ENCODE measurements at regions of chr11 and their contacts with region 1.

Region 1: DNA sequence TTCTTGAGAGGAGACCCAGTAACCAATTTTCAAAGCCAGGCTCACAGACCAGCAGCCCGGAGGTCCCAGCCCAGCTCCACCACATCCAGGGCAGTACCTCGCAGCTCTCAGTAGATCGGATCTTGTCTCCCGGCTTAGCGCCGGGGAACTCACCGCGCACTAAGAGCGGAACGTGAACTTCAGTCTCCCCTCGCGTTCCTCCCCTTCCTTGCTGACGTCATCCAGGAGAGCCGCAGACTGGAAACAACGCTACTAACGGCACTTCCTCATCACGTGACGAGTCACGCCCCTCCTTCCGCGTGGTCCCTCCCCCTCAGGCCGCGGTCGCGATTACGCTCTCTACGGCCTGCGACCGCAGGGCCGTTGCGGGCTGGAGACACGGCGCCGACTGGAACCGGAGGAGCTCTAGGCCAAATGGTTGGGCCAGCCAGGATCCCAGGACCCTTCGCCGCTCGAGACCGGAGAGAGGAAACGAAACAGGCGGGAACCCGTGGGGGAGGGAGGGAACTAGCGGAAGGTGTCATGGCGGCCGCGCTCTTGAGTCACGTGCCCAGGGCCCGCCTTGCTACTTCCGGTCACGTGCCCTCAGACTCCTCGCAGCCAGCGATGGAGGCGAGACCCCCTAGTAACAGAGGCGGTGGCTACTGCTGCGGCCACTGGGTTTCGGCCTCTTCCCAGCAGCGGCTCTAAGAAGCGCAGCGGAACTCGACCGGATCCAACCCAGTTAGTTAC is at the starts of genes GTF2H1 and HPS5:
- DNase-seq: peak; percentile 100
- ATAC-seq: peak; percentile 87
- H3K4me3 ChIP-seq: peak within 1 kb of the TSS; percentile 82 to 94 (median 90)
- H3K4me3 Mint-ChIP-seq: peak within 1 kb of the TSS; percentile 96
- H3K27ac ChIP-seq: peak within 1 kb of the TSS; percentile 98 to 100
- H3K27ac Mint-ChIP-seq: peak within 1 kb of the TSS; percentile 100
- H3K4me1 ChIP-seq: peaks cover 39 to 54% of the 10 kb centered on the region in 2 donors
- H3K4me1 Mint-ChIP-seq: peaks cover 76% of the 10 kb centered on the region
- H3K27me3 ChIP-seq: no peaks in the 10 kb centered on the region
- H3K27me3 Mint-ChIP-seq: no peaks in the 10 kb centered on the region
- CTCF ChIP-seq: no peak
- total RNA-seq, gene GTF2H1: 71.9 and 74.7 TPM in 2 replicates
- total RNA-seq, gene HPS5: 31.3 and 38.4 TPM in 2 replicates

Region 2: DNA sequence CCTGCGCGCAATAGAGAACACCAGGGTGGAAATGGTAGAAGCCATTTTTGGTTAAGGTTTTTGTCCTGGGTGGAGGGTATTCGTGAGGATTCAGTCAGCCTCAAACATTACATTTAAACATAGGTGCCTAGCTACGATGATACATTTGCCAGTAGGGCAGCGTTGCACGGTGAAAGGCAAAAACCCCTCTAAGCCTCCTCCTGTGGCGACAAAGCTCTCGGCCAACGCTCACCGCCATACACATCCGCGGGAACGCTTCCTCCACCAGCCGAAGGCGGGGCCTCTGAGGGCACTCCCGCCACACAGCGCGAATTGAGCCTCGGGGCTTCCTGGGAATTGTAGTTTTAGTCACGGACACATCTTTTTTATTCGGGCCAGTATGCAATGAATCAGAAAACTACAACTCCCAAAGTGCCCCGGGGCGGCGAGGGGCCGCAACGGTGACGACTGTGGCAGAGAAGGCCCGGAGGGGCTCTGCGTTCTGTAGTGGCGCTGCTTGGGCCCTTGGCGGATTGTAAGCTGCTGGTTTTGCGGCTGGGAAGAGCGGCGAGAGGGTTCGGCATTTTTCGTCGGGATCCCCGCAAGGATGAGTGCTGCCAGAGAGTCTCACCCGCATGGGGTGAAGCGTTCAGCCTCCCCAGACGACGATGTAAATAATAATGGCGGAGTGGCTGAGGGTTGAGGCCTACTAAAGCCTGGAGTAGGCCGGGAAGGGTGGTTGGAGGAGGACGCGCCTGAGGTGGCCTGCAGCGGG is 1583.8 kb before region 1 on chr11 and contains the start of gene C11orf58:
- CTCF ChIA-PET with region 1: no interaction called
- POLR2A ChIA-PET with region 1: no interaction called
- intact Hi-C with region 1: loop called (anchors 5 kb)
- DNase-seq: peak; percentile 98
- ATAC-seq: peak; percentile 97
- H3K4me3 ChIP-seq: peak within 1 kb of the TSS; percentile 86 to 97 (median 95)
- H3K4me3 Mint-ChIP-seq: peak within 1 kb of the TSS; percentile 73
- H3K27ac ChIP-seq: peak within 1 kb of the TSS; percentile 98 to 99
- H3K27ac Mint-ChIP-seq: peak within 1 kb of the TSS; percentile 66
- H3K4me1 ChIP-seq: peaks cover 25 to 28% of the 10 kb centered on the region in 2 donors
- H3K4me1 Mint-ChIP-seq: peaks cover 20% of the 10 kb centered on the region
- H3K27me3 ChIP-seq: no peaks in the 10 kb centered on the region
- H3K27me3 Mint-ChIP-seq: no peaks in the 10 kb centered on the region
- CTCF ChIP-seq: no peak
- total RNA-seq, gene C11orf58: 125 and 129 TPM in 2 replicates

Region 3: GRCh38 chr11:18027475-18027874 is 294.7 kb before region 1 on chr11:
- CTCF ChIA-PET with region 1: no interaction called
- POLR2A ChIA-PET with region 1: no interaction called
- intact Hi-C with region 1: no loop called
- DNase-seq: no peak
- ATAC-seq: no peak
- H3K4me3 ChIP-seq: no peak overlapping the region
- H3K4me3 Mint-ChIP-seq: no peak overlapping the region
- H3K27ac ChIP-seq: no peak overlapping the region
- H3K27ac Mint-ChIP-seq: no peak overlapping the region
- H3K4me1 ChIP-seq: no peaks in the 10 kb centered on the region
- H3K4me1 Mint-ChIP-seq: no peaks in the 10 kb centered on the region
- H3K27me3 ChIP-seq: no peaks in the 10 kb centered on the region
- H3K27me3 Mint-ChIP-seq: no peaks in the 10 kb centered on the region
- CTCF ChIP-seq: no peak

Region 4: DNA sequence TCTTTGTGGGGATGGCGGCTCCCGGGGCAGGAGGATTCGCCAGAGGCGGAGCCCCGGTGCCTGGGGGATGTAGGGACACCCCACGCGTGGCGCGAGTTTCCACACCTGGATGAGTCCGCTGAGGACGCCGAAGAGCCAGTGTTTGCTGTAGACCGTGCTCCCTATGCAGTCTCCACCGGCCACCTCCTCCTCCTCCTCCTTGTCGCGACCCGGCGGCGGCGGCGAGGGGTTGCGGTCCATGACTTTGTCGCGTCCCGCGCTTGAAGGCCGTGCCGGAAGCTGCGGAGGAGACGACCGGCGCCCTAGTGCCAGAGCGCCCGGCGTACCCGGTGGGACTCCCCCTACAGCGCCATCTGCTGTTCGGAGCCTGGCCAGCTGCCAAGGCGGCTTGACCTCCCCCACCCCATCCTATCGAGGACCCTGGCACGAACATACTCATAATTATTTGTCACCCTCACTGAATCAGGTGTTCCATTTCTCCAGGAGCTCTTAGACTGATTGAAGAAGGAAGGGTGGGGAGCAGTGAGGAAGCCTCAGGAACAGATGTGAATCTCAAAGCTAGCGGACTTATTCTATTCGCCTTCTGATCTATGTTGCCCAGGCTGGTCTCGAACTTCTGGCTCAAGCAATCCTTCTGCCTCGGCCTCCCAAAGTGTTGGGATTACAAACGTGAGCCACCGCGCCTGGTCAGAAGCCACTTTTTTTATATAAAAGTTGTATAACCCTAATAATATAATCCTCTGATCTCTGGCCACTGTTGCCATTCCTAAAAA is 216.2 kb before region 1 on chr11 and contains the start of gene SAAL1:
- CTCF ChIA-PET with region 1: no interaction called
- POLR2A ChIA-PET with region 1: no interaction called
- intact Hi-C with region 1: loop called (anchors 1 kb)
- DNase-seq: peak; percentile 91
- ATAC-seq: peak; percentile 98
- H3K4me3 ChIP-seq: peak within 1 kb of the TSS; percentile 70 to 99 (median 82)
- H3K4me3 Mint-ChIP-seq: peak within 1 kb of the TSS; percentile 95
- H3K27ac ChIP-seq: peak within 1 kb of the TSS; percentile 65 to 91
- H3K27ac Mint-ChIP-seq: peak within 1 kb of the TSS; percentile 90
- H3K4me1 ChIP-seq: peaks cover 15 to 17% of the 10 kb centered on the region in 2 donors
- H3K4me1 Mint-ChIP-seq: peaks cover 28% of the 10 kb centered on the region
- H3K27me3 ChIP-seq: peaks cover 0 to 4% (median 1%) of the 10 kb centered on the region in 4 experiments
- H3K27me3 Mint-ChIP-seq: peaks cover 19% of the 10 kb centered on the region
- CTCF ChIP-seq: peak; percentile 89
- total RNA-seq, gene SAAL1: 35.2 and 37.8 TPM in 2 replicates

Region 5: DNA sequence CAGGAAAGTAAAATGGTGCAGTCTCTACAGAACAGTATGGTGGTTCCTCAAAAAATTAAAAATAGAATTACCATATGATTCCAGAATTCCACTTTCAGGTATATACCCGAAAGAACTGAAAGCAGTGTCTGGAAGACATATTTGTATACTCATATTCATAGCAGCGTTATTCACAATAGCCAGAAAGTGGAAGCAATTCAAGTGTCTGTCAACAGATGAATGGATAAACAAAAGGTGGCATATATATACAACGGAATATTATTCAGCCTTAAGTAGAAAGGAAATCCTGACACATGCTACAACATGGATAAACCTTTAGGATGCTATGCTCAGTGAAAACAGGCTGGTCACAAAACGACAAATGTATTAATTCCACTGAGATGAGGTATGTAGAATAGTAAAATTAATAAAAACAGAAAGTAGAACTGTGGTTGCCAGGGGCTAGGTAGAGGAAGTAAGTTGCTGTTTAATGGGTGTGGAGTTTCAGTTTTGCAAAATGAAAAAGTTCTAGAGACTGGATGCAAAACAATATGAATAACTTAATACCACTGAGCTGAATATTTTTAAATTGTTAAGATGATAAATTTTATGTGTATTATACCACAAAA is 41.6 kb before region 1 on chr11:
- CTCF ChIA-PET with region 1: no interaction called
- POLR2A ChIA-PET with region 1: interaction called, 8 read pairs
- intact Hi-C with region 1: loop called (anchors 5 kb)
- DNase-seq: peak; percentile 64
- ATAC-seq: peak; percentile 78
- H3K4me3 ChIP-seq: peak overlapping the region in 3 of 5 experiments; percentile 13 to 45 (median 44)
- H3K4me3 Mint-ChIP-seq: peak overlapping the region; percentile 78
- H3K27ac ChIP-seq: peak overlapping the region; percentile 72 to 86
- H3K27ac Mint-ChIP-seq: peak overlapping the region; percentile 80
- H3K4me1 ChIP-seq: peaks cover 34 to 39% of the 10 kb centered on the region in 2 donors
- H3K4me1 Mint-ChIP-seq: peaks cover 37% of the 10 kb centered on the region
- H3K27me3 ChIP-seq: no peaks in the 10 kb centered on the region
- H3K27me3 Mint-ChIP-seq: no peaks in the 10 kb centered on the region
- CTCF ChIP-seq: no peak

Region 6: DNA sequence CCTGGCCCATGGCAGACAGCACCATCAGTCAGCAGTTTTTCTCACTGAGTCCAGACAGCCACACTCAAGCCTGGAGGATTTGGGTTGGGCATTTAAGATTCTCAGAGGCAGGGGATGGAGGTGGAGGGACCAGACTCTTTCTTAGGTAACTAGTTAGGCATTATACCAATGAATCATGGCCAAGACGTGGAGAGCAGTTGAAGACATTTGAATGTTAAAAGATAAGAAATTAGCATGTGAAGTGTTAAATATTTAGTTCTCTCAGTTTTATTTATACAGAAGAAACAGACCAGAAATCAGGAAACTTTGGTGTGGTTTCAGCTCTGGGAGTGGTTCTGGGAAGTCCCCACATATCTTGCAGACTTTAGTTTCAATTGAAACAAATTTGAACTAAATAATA is 10.2 kb after region 1 on chr11:
- CTCF ChIA-PET with region 1: no interaction called
- POLR2A ChIA-PET with region 1: no interaction called
- intact Hi-C with region 1: no loop called
- DNase-seq: peak; percentile 39
- ATAC-seq: no peak
- H3K4me3 ChIP-seq: peak overlapping the region in 3 of 5 experiments; percentile 6 to 30 (median 23)
- H3K4me3 Mint-ChIP-seq: peak overlapping the region; percentile 69
- H3K27ac ChIP-seq: peak overlapping the region; percentile 28 to 79
- H3K27ac Mint-ChIP-seq: peak overlapping the region; percentile 86
- H3K4me1 ChIP-seq: peaks cover 22 to 42% of the 10 kb centered on the region in 2 donors
- H3K4me1 Mint-ChIP-seq: peaks cover 46% of the 10 kb centered on the region
- H3K27me3 ChIP-seq: no peaks in the 10 kb centered on the region
- H3K27me3 Mint-ChIP-seq: no peaks in the 10 kb centered on the region
- CTCF ChIP-seq: no peak

Region 7: DNA sequence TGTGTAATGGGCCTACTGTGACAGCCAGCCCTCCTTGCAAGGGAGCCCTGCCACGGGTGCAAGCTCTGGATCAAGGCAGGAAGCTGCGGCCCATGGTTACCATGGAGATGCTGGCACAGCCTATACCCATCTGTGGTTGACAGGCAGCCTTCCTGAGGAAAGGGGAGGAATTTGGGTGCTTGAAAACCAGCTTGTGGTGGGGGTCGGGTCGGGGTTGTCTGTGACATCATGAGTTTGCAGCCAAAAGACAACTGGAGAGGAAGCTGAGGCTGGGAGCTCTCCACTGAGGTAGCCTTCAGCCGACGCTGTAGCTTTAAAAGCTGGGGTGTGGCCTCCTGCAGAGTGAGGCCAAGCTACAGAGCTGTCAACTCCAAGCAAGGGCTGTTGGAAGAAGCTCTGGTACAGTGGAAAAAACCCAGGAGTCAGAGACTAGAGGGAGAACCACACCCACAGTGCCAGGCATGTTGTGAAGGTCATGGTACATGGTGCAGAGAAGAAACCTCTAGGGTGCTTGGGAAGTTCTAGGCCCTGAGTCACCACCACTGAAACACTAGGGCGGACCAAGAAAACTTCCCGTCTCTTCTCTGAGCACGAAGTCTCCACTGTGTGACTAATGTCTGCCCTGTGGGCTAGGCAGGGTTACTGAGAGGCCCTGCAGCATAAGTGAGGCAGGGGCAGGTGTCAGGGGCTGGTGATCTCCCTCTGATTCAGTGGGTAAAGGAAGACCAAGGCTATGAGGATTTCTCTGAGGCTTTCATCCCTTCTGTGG is 61.4 kb after region 1 on chr11:
- CTCF ChIA-PET with region 1: no interaction called
- POLR2A ChIA-PET with region 1: no interaction called
- intact Hi-C with region 1: no loop called
- DNase-seq: peak; percentile 19
- ATAC-seq: peak; percentile 86
- H3K4me3 ChIP-seq: no peak overlapping the region
- H3K4me3 Mint-ChIP-seq: peak overlapping the region; percentile 37
- H3K27ac ChIP-seq: peak overlapping the region; percentile 60 to 75
- H3K27ac Mint-ChIP-seq: peak overlapping the region; percentile 94
- H3K4me1 ChIP-seq: peaks cover 17 to 18% of the 10 kb centered on the region in 2 donors
- H3K4me1 Mint-ChIP-seq: peaks cover 15% of the 10 kb centered on the region
- H3K27me3 ChIP-seq: no peaks in the 10 kb centered on the region
- H3K27me3 Mint-ChIP-seq: no peaks in the 10 kb centered on the region
- CTCF ChIP-seq: no peak

Region 8: GRCh38 chr11:18395735-18396504 is 73.8 kb after region 1 on chr11:
- CTCF ChIA-PET with region 1: interaction called, 11 read pairs
- POLR2A ChIA-PET with region 1: interaction called, 18 read pairs
- intact Hi-C with region 1: loop called (anchors 1 kb)
- DNase-seq: peak; percentile 98
- ATAC-seq: peak; percentile 78
- H3K4me3 ChIP-seq: peak overlapping the region; percentile 72 to 96 (median 92)
- H3K4me3 Mint-ChIP-seq: peak overlapping the region; percentile 98
- H3K27ac ChIP-seq: peak overlapping the region; percentile 48 to 71
- H3K27ac Mint-ChIP-seq: peak overlapping the region; percentile 94
- H3K4me1 ChIP-seq: peaks cover 11 to 15% of the 10 kb centered on the region in 2 donors
- H3K4me1 Mint-ChIP-seq: peaks cover 28% of the 10 kb centered on the region
- H3K27me3 ChIP-seq: no peaks in the 10 kb centered on the region
- H3K27me3 Mint-ChIP-seq: no peaks in the 10 kb centered on the region
- CTCF ChIP-seq: no peak

Region 9: GRCh38 chr11:18588297-18589252 is 266.4 kb after region 1 on chr11 and contains the start of gene UEVLD:
- CTCF ChIA-PET with region 1: no interaction called
- POLR2A ChIA-PET with region 1: no interaction called
- intact Hi-C with region 1: loop called (anchors 5 kb)
- DNase-seq: peak; percentile 73
- ATAC-seq: peak; percentile 87
- H3K4me3 ChIP-seq: peak within 1 kb of the TSS; percentile 92 to 97 (median 96)
- H3K4me3 Mint-ChIP-seq: no peak within 1 kb of the TSS
- H3K27ac ChIP-seq: peak within 1 kb of the TSS; percentile 41 to 78
- H3K27ac Mint-ChIP-seq: no peak within 1 kb of the TSS
- H3K4me1 ChIP-seq: peaks cover 13 to 17% of the 10 kb centered on the region in 2 donors
- H3K4me1 Mint-ChIP-seq: peaks cover 3% of the 10 kb centered on the region
- H3K27me3 ChIP-seq: no peaks in the 10 kb centered on the region
- H3K27me3 Mint-ChIP-seq: no peaks in the 10 kb centered on the region
- CTCF ChIP-seq: no peak
- total RNA-seq, gene UEVLD: 12.4 and 12.8 TPM in 2 replicates

Region 10: GRCh38 chr11:18698341-18699268 is 376.5 kb after region 1 on chr11 and contains the start of gene TMEM86A:
- CTCF ChIA-PET with region 1: no interaction called
- POLR2A ChIA-PET with region 1: no interaction called
- intact Hi-C with region 1: loop called (anchors 1 kb)
- DNase-seq: peak; percentile 89
- ATAC-seq: peak; percentile 99
- H3K4me3 ChIP-seq: peak within 1 kb of the TSS; percentile 37 to 71 (median 60)
- H3K4me3 Mint-ChIP-seq: peak within 1 kb of the TSS; percentile 90
- H3K27ac ChIP-seq: peak within 1 kb of the TSS in 1 of 2 donors; percentile 32
- H3K27ac Mint-ChIP-seq: peak within 1 kb of the TSS; percentile 48
- H3K4me1 ChIP-seq: peaks cover 13 to 17% of the 10 kb centered on the region in 2 donors
- H3K4me1 Mint-ChIP-seq: peaks cover 18% of the 10 kb centered on the region
- H3K27me3 ChIP-seq: peaks cover 0 to 17% (median 0%) of the 10 kb centered on the region in 4 experiments
- H3K27me3 Mint-ChIP-seq: peaks cover 16% of the 10 kb centered on the region
- CTCF ChIP-seq: no peak
- total RNA-seq, gene TMEM86A: 0.58 and 1.1 TPM in 2 replicates